ENCODE measurements at regions of chr17 and their contacts with region 1.

Region 1: GRCh38 chr17:81601525-81602120 is 35.3 kb downstream of the NPLOC4 start:
- DNase-seq: peak; percentile 87
- H3K4me3 ChIP-seq: no peak overlapping the region
- H3K27ac ChIP-seq: peak overlapping the region in 1 of 2 experiments; percentile 31; a peak in 1 of 4 replicates
- H3K4me1 ChIP-seq: peaks cover 2 to 20% of the 10 kb centered on the region in 2 experiments
- H3K27me3 ChIP-seq: no peaks in the 10 kb centered on the region
- CTCF ChIP-seq: peak; percentile 98
- EP300 ChIP-seq: no peak
- RAD21 ChIP-seq: peak; percentile 92

Region 2: DNA sequence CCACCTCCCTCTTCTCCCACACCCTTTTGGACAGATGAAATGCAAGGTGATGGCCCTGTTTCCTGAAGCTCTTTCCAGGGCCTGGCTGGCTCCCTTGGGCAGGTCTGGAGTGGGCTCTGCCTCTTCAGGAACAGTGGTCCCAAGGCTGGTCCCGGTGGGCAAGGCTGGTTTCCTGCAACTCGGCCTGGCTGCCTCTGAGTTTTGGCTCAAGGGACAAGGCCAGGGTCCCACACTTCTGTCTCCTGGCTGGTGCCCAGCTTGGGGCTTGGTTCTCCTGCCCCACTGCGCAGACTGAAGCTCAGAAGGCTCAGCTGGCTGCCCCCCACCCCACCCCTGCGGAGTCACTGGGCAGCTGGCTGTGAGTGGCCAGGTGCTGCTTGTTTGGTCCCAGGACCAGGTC is 85.2 kb before region 1 on chr17:
- CTCF ChIA-PET with region 1: no interaction called
- POLR2A ChIA-PET with region 1: no interaction called
- DNase-seq: no peak
- H3K4me3 ChIP-seq: peak overlapping the region; percentile 69 to 73; a peak in 3 of 4 replicates
- H3K27ac ChIP-seq: peak overlapping the region in 1 of 2 experiments; percentile 88; a peak in 2 of 4 replicates
- H3K4me1 ChIP-seq: peaks cover 17 to 32% of the 10 kb centered on the region in 2 experiments; a peak in 3 of 4 replicates
- H3K27me3 ChIP-seq: no peaks in the 10 kb centered on the region
- CTCF ChIP-seq: no peak
- EP300 ChIP-seq: no peak
- RAD21 ChIP-seq: no peak

Region 3: GRCh38 chr17:81558941-81559806 is 42.4 kb before region 1 on chr17:
- CTCF ChIA-PET with region 1: interaction called, 18 read pairs
- POLR2A ChIA-PET with region 1: no interaction called
- DNase-seq: no peak
- H3K4me3 ChIP-seq: no peak overlapping the region
- H3K27ac ChIP-seq: no peak overlapping the region
- H3K4me1 ChIP-seq: peaks cover 1 to 20% of the 10 kb centered on the region in 2 experiments; a peak in 3 of 4 replicates
- H3K27me3 ChIP-seq: no peaks in the 10 kb centered on the region
- CTCF ChIP-seq: peak; percentile 47
- EP300 ChIP-seq: no peak
- RAD21 ChIP-seq: peak; percentile 15; the same call in 1 of the 2 replicates

Region 4: GRCh38 chr17:81576621-81577277 is 24.9 kb before region 1 on chr17:
- CTCF ChIA-PET with region 1: interaction called, 23 read pairs
- POLR2A ChIA-PET with region 1: no interaction called
- DNase-seq: no peak
- H3K4me3 ChIP-seq: peak overlapping the region in 1 of 2 experiments; percentile 3; a peak in 1 of 4 replicates
- H3K27ac ChIP-seq: peak overlapping the region; percentile 29 to 67; a peak in 3 of 4 replicates
- H3K4me1 ChIP-seq: peaks cover 28 to 49% of the 10 kb centered on the region in 2 experiments
- H3K27me3 ChIP-seq: no peaks in the 10 kb centered on the region
- CTCF ChIP-seq: peak; percentile 34
- EP300 ChIP-seq: peak in 1 of 2 experiments; percentile 77; a peak in 1 of 4 replicates
- RAD21 ChIP-seq: no peak

Region 5: DNA sequence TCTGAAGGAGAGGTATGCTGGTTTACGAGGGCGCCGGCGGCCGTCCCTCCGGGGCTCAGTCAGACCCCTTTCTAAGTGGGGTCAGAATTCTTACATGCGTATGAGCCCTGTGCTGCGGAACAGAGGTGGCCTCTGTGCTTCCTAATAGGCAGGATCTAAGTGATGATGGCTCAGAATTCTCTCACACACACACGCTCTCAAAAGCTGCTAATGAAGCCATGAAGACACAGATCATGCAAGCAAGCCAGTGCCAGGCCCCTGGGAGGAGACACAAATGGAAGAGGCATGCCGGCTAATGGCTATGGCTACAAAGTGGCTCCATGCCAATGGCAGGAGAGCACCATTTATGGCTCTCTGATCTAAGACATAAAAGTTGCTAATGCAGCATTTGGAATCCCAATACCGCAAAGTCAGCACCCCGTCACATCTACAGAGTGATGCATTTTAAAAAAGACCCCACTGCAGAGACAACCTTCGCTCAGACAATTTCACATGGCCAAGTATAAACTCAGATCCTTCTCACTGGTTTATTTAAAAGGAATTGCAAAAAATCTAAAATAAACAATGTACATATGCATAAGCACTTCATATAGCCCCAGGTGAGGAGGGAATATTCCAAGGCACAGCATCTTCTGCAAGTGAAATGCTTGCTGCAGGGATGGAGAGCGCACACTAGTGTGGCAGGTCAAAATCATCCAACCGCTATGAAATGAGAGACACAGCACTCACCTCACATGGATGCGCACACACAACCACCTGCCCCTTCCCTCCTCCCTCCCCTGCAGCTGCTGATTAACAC is 10.7 kb after region 1 on chr17:
- CTCF ChIA-PET with region 1: interaction called, 22 read pairs
- POLR2A ChIA-PET with region 1: no interaction called
- DNase-seq: no peak
- H3K4me3 ChIP-seq: no peak overlapping the region
- H3K27ac ChIP-seq: no peak overlapping the region
- H3K4me1 ChIP-seq: no peaks in the 10 kb centered on the region
- H3K27me3 ChIP-seq: no peaks in the 10 kb centered on the region
- CTCF ChIP-seq: no peak
- EP300 ChIP-seq: no peak
- RAD21 ChIP-seq: no peak

Region 6: DNA sequence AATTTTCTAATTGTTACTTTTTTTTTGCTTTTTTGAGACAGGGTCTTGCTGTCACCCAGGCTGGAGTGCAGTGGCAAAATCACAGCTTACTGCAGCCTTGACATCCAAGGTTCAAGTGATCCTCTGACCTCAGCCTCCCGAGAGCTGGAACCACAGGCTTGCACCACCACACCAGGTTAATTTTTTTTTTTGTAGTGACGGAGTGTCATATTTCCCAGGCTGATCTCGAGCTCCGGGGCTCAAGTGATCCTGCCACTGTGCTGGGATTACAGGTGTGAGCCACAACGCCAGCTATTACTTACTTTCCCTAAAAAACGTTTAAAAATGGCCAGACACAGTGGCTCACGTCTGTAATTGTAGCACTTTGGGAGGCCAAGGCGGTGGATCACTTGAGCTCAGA is 28.7 kb after region 1 on chr17:
- CTCF ChIA-PET with region 1: interaction called, 55 read pairs
- POLR2A ChIA-PET with region 1: no interaction called
- DNase-seq: no peak
- H3K4me3 ChIP-seq: no peak overlapping the region
- H3K27ac ChIP-seq: no peak overlapping the region
- H3K4me1 ChIP-seq: peaks cover 0 to 6% of the 10 kb centered on the region in 2 experiments; a peak in 2 of 4 replicates
- H3K27me3 ChIP-seq: no peaks in the 10 kb centered on the region
- CTCF ChIP-seq: no peak
- EP300 ChIP-seq: no peak
- RAD21 ChIP-seq: no peak

Region 7: DNA sequence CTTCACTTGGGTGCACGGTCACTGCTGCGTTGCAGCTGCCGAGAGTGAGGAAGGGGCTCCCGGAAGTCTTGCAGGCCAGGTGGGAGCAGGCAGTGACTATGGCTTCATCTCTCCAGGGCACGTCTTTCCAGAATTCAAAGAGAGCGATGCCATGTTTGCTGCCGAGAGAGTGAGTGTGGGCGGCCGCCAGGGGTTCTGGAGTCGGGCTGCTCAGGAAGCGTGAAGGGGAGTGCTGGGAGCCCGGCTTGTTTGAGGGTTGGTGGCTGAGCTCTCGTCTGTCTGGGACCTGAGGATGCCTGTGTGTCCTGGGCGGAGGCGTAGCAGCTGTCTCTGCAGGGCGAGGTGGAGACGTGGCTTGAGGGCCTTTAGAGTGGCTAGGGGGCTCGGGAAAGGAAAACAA is 88.4 kb after region 1 on chr17:
- CTCF ChIA-PET with region 1: no interaction called
- POLR2A ChIA-PET with region 1: no interaction called
- DNase-seq: no peak
- H3K4me3 ChIP-seq: no peak overlapping the region
- H3K27ac ChIP-seq: no peak overlapping the region
- H3K4me1 ChIP-seq: peaks cover 5 to 6% of the 10 kb centered on the region in 2 experiments; a peak in 1 of 4 replicates
- H3K27me3 ChIP-seq: no peaks in the 10 kb centered on the region
- CTCF ChIP-seq: no peak
- EP300 ChIP-seq: no peak
- RAD21 ChIP-seq: no peak

Region 8: DNA sequence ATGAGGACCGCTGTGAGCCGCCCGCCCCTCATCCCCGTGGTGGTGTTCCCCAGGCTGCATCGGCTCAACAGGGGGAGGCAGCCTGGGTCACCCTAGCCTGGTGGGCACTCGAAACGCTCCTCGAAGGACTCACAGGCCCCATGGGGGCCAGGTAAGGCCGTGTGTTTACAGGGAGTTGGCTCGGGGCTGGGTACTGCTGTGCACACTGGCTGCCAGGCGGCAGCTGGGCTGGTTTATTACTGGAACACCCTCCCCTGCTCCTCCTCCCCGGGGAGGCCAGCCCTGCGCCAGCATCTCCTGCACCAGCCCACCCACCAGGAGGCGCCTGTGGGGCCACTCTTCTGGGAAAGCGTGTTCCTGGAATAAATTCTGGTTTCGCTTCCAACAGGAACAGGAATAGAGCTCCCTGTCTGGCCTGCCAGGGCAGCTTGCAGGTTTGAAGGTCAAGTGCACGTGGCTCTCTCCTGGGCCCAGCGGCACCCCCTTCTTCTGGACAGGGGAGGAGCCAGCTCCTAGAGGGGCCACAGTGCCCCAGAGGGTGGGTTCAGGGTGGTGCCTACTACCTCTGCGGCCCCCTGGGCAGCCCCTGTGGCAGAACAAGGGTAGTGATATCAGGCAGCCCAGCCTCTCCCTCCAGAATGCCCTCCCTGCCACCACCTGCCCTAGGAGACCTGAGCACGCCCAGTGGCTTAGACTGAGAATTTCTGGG is 220.1 kb after region 1 on chr17:
- CTCF ChIA-PET with region 1: no interaction called
- POLR2A ChIA-PET with region 1: no interaction called
- DNase-seq: peak; percentile 82
- H3K4me3 ChIP-seq: no peak overlapping the region
- H3K27ac ChIP-seq: peak overlapping the region in 1 of 2 experiments; percentile 23; a peak in 1 of 4 replicates
- H3K4me1 ChIP-seq: peaks cover 0 to 11% of the 10 kb centered on the region in 2 experiments; a peak in 1 of 4 replicates
- H3K27me3 ChIP-seq: no peaks in the 10 kb centered on the region; the same call in 1 of the 2 replicates
- CTCF ChIP-seq: peak; percentile 55
- EP300 ChIP-seq: no peak
- RAD21 ChIP-seq: peak; percentile 46

Region 9: GRCh38 chr17:81871387-81872230 is 270.0 kb after region 1 on chr17:
- CTCF ChIA-PET with region 1: no interaction called
- POLR2A ChIA-PET with region 1: no interaction called
- DNase-seq: peak; percentile 100
- H3K4me3 ChIP-seq: peak overlapping the region; percentile 82 to 83
- H3K27ac ChIP-seq: peak overlapping the region; percentile 95
- H3K4me1 ChIP-seq: peaks cover 24 to 40% of the 10 kb centered on the region in 2 experiments; a peak in 3 of 4 replicates
- H3K27me3 ChIP-seq: no peaks in the 10 kb centered on the region
- CTCF ChIP-seq: peak; percentile 37; the same call in 1 of the 2 replicates
- EP300 ChIP-seq: 0 out of 4 replicates have a peak, but pooled peaks of 1 of the 2 experiments have one; percentile 6
- RAD21 ChIP-seq: no peak